ENCODE measurements at regions of chr2 and their contacts with region 1.

Region 1: GRCh38 chr2:102082571-102083392 is 59.8 kb upstream of the IL1R1 start:
- DNase-seq: peak; percentile 41
- H3K4me3 Mint-ChIP-seq: peak overlapping the region; percentile 64
- H3K27ac Mint-ChIP-seq: peak overlapping the region; percentile 89
- H3K4me1 Mint-ChIP-seq: peaks cover 37% of the 10 kb centered on the region
- H3K27me3 Mint-ChIP-seq: peaks cover 6% of the 10 kb centered on the region

Region 2: DNA sequence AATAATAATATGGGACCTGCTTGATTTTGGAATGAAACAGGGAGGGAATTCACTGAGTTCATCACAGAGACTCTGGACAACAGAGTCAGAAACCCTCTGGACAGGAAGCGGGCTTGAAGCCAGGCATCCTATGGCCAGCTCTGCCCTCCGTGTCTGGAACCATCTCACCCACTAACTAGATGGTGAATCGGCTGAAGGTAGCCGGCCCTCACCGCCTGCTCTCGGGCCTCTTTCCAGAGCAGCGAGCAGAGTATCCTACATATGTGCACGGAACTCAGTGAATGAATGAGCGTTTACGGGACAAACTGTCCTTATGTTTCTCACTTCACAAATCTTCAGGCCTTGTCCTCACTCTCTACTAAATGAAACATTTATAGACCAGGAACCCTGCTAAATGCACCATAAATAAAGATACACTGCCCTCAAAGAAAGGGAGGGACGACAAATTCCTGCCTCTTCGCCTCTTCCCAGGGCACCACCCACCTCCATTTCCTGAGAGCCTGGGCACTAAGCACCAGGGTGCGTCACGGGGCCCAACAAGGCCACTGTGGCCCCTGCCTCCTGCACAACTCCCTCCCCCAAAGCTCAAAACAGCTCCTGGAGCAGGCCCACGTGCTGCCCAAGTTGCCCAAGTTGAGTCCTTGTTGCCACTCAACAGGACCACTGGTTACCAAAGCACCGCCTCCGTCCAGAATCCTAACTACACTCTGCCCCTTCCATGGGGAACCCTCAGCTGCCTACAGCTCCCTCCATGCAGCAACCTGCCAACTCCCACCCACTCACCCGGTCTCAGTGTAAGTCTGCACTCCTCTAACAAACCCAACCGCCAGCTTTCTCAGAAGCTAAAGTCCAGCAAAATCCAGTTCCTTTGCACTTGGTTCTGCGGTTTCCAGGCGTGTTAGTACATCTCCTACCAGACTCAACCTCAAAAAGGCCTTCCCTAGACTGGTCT is 933.3 kb before region 1 on chr2:
- intact Hi-C with region 1: no loop called
- DNase-seq: no peak
- H3K4me3 Mint-ChIP-seq: peak overlapping the region; percentile 63
- H3K27ac Mint-ChIP-seq: no peak overlapping the region
- H3K4me1 Mint-ChIP-seq: peaks cover 11% of the 10 kb centered on the region
- H3K27me3 Mint-ChIP-seq: peaks cover 65% of the 10 kb centered on the region

Region 3: GRCh38 chr2:101998896-101999789 is 83.6 kb before region 1 on chr2:
- intact Hi-C with region 1: loop called (anchors 1 kb)
- DNase-seq: no peak
- H3K4me3 Mint-ChIP-seq: no peak overlapping the region
- H3K27ac Mint-ChIP-seq: peak overlapping the region; percentile 76
- H3K4me1 Mint-ChIP-seq: peaks cover 27% of the 10 kb centered on the region
- H3K27me3 Mint-ChIP-seq: peaks cover 4% of the 10 kb centered on the region

Region 4: GRCh38 chr2:102044235-102044896 is 38.4 kb before region 1 on chr2:
- intact Hi-C with region 1: loop called (anchors 2 kb)
- DNase-seq: no peak
- H3K4me3 Mint-ChIP-seq: no peak overlapping the region
- H3K27ac Mint-ChIP-seq: no peak overlapping the region
- H3K4me1 Mint-ChIP-seq: peaks cover 22% of the 10 kb centered on the region
- H3K27me3 Mint-ChIP-seq: peaks cover 22% of the 10 kb centered on the region

Region 5: GRCh38 chr2:102114290-102114721 is 31.5 kb after region 1 on chr2:
- intact Hi-C with region 1: loop called (anchors 1 kb)
- DNase-seq: no peak
- H3K4me3 Mint-ChIP-seq: no peak overlapping the region
- H3K27ac Mint-ChIP-seq: no peak overlapping the region
- H3K4me1 Mint-ChIP-seq: peaks cover 32% of the 10 kb centered on the region
- H3K27me3 Mint-ChIP-seq: peaks cover 15% of the 10 kb centered on the region

Region 6: GRCh38 chr2:102258386-102259074 is 175.7 kb after region 1 on chr2:
- intact Hi-C with region 1: loop called (anchors 1 kb)
- DNase-seq: peak; percentile 36
- H3K4me3 Mint-ChIP-seq: peak overlapping the region; percentile 81
- H3K27ac Mint-ChIP-seq: peak overlapping the region; percentile 100
- H3K4me1 Mint-ChIP-seq: peaks cover 52% of the 10 kb centered on the region
- H3K27me3 Mint-ChIP-seq: no peaks in the 10 kb centered on the region

Region 7: GRCh38 chr2:102366406-102367112 is 283.8 kb after region 1 on chr2:
- intact Hi-C with region 1: loop called (anchors 2 kb)
- DNase-seq: no peak
- H3K4me3 Mint-ChIP-seq: peak overlapping the region; percentile 79
- H3K27ac Mint-ChIP-seq: peak overlapping the region; percentile 97
- H3K4me1 Mint-ChIP-seq: peaks cover 97% of the 10 kb centered on the region
- H3K27me3 Mint-ChIP-seq: no peaks in the 10 kb centered on the region

Measured in activated T-helper 1 cell treated with anti-CD3 and anti-CD28 coated beads, Interleukin-12 subunit alpha, Interleukin-12 subunit beta, Interleukin-2, Interleukin-4 antibody, amounts not matched to agents 30 ng/mL and 10 ng/mL and 1 ng/mL, durations not matched to agents 14 hours and 24 hours and 36 hours (primary cell).